ENCODE measurements at regions of chr14 and their contacts with region 1.

Region 1: DNA sequence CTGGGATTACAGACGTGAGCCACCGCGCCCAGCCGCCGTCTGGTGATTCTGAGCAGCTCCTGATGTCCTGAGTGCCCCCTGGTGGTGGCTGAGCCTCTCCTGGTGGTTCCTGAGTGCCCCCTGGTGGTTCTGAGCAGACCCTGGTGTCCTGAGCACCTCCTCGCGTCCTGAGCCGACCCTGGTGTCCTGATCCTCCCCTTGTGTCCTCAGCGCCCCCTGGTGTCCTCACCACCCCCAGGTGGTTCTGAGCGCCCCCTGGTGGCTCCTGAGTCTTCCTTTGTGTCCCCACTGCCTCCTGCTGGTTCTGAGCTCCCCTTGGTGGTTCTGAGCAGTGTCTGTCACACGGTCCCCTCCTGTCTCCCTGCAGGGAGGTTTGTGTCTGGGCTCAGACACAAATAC is 1304.9 kb downstream of the TMEM121 start:
- DNase-seq: peak; percentile 89
- ATAC-seq: peak; percentile 74
- H3K4me3 Mint-ChIP-seq: no peak overlapping the region
- H3K27ac Mint-ChIP-seq: no peak overlapping the region
- H3K4me1 Mint-ChIP-seq: no peaks in the 10 kb centered on the region
- H3K27me3 Mint-ChIP-seq: peaks cover 3% of the 10 kb centered on the region
- CTCF ChIP-seq: peak; percentile 91

Region 2: DNA sequence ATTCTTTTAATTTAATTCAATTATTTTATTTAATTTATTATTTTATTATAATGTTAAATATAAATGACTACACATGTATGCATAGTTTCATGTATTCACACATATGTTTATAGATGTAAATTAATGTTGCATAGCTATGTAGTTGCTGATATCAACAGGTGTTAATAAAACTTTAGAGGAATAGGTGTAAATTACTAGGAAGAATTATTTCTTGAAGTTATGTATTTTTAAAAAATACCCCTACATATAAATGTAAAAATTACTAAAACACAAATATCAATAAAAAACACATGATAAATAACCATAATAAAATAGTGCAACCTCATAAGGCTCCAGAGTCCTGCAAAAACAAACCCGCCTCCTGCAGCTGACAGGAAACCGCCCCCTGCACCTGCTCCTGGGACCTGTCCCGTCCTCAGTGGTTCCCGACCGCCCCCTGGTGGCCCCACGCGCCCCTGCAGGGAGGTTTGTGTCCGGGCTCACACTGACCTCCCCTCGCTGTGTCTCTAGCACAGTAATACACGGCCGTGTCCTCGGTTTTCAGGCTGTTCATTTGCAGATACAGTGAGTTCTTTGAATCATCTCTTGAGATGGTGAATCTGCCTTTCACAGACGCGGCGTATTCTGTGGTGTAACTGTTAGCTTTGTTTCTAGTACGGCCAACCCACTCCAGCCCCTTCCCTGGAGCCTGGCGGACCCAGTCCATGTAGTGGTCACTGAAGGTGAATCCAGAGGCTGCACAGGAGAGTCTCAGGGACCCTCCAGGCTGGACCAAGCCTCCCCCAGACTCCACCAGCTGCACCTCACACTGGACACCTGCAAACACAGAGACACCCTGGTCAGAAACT is 40.9 kb before region 1 on chr14:
- CTCF ChIA-PET with region 1: interaction called, 67 read pairs
- POLR2A ChIA-PET with region 1: no interaction called
- intact Hi-C with region 1: no loop called
- DNase-seq: peak; percentile 92
- ATAC-seq: peak; percentile 92
- H3K4me3 Mint-ChIP-seq: no peak overlapping the region
- H3K27ac Mint-ChIP-seq: no peak overlapping the region
- H3K4me1 Mint-ChIP-seq: peaks cover 8% of the 10 kb centered on the region
- H3K27me3 Mint-ChIP-seq: peaks cover 4% of the 10 kb centered on the region
- CTCF ChIP-seq: peak; percentile 90

Region 3: DNA sequence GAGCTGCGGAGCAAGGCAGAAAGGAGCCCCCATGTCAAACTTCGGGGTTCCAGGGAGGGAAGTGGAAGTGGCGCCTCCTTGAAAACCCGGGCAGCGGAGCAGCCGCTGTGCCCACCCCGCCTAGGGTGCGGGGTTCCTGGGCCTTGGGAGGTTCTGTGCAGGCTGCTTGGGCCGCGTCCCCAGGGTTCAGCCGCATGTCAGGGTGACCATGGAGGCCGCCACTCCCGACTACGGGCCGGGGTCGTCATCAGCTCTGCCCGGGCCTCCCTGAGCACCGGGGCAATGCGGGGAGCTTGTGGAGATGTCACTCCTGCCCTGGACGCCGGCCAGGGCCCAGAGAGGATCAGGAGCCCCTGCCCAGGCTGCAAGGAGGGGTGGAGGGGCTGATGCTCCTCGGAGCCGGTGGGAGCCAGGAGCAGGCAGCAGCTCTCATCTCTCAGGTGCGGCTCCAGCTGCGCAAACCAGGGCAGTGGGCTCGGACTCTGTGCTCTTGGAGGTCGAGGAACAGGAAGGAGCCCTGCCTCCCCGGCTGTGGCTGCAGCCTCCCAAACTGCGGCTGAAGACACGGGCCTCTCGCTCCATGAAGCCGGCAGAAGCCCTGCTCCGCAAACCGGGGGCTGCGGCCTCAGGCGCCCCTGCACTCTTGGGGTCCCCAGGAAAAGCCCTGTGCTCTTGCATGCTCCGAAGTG is 18.4 kb before region 1 on chr14:
- CTCF ChIA-PET with region 1: interaction called, 19 read pairs
- POLR2A ChIA-PET with region 1: no interaction called
- intact Hi-C with region 1: no loop called
- DNase-seq: no peak
- ATAC-seq: no peak
- H3K4me3 Mint-ChIP-seq: no peak overlapping the region
- H3K27ac Mint-ChIP-seq: no peak overlapping the region
- H3K4me1 Mint-ChIP-seq: peaks cover 12% of the 10 kb centered on the region
- H3K27me3 Mint-ChIP-seq: peaks cover 2% of the 10 kb centered on the region
- CTCF ChIP-seq: no peak

Region 4: GRCh38 chr14:106872611-106873446 is 41.5 kb after region 1 on chr14:
- CTCF ChIA-PET with region 1: interaction called, 298 read pairs
- POLR2A ChIA-PET with region 1: interaction called, 5 read pairs
- intact Hi-C with region 1: no loop called
- DNase-seq: peak; percentile 95
- ATAC-seq: peak; percentile 92
- H3K4me3 Mint-ChIP-seq: peak overlapping the region; percentile 30
- H3K27ac Mint-ChIP-seq: peak overlapping the region; percentile 8
- H3K4me1 Mint-ChIP-seq: peaks cover 15% of the 10 kb centered on the region
- H3K27me3 Mint-ChIP-seq: peaks cover 25% of the 10 kb centered on the region
- CTCF ChIP-seq: peak; percentile 83